CD4-positive, alpha-beta memory T cell (primary cell): ENCODE measurements at regions of chr12 and their contacts with region 1.

Region 1: DNA sequence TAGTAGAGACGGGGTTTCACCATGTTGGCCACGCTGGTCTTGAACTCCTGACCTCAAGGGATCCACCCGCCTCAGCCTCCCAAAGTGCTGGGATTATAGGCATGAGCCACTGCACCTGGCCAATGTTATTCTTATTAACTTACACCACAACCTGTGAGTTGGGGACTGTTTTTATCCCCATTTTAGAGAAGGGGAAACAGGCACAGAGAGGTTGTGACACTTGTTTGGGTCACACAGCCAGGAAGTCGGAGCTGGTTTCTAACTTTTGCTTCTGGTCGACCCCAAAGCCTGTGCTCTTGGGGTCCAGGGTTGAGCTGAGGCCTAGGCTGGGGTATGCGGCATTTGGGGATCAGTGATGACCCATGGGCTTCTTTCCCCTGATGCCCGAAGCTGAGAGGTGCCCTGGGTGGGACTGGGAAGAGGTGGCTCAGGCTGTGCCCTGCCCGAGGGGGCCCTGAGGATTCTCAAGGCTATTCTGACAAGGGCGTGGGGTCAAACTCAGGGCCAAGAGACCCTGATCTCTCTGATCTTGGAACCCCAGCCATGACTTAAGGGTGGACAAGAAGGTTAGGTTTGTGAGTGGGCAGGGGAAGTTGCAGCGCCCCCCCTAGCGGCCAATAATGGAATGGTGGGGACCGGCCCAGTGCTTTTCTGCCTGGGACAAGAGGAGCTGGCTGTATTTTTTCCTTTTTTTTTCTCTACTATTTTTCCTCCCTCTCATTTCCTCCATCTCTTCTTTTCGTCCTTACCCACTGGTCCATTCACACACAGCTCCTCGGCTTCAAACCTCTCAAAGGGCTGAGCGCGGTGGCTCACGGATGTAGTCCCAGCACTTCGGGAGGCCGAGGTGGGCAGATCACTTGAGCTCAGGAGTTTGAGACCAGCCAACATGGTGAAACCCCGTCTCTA is 3.0 kb downstream of the SDSL start:
- DNase-seq: peak; percentile 30 to 43 (median 35)
- H3K4me3 ChIP-seq: no peak overlapping the region
- H3K4me3 Mint-ChIP-seq: no peak overlapping the region
- H3K27ac ChIP-seq: no peak overlapping the region
- H3K27ac Mint-ChIP-seq: no peak overlapping the region
- H3K4me1 ChIP-seq: no peaks in the 10 kb centered on the region
- H3K4me1 Mint-ChIP-seq: peaks cover 0 to 13% (median 0%) of the 10 kb centered on the region in 4 donors
- H3K27me3 ChIP-seq: no peaks in the 10 kb centered on the region
- H3K27me3 Mint-ChIP-seq: peaks cover 6 to 11% of the 10 kb centered on the region in 2 donors

Region 2: DNA sequence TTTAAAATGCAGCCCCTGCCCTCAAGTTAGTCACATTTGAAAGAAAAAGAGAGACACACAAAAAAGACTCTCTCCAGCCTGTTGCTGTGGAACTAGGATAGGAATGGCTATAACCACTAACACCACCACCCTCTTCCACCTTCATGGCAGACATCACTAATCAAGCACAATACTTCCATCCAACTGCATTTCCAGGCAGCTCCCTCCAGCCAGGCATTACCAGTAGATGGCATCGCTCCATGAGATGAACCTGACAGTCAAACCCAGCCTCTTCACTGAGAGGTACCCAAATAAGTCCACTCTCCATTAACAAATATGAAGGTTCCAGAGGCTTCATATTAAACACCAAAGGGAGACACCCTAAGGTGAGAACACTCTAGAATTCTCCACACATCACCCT is 114.7 kb before region 1 on chr12:
- CTCF ChIA-PET with region 1: interaction called, 13 read pairs
- POLR2A ChIA-PET with region 1: no interaction called
- intact Hi-C with region 1: no loop called
- DNase-seq: no peak
- H3K4me3 ChIP-seq: no peak overlapping the region
- H3K4me3 Mint-ChIP-seq: no peak overlapping the region
- H3K27ac ChIP-seq: no peak overlapping the region
- H3K27ac Mint-ChIP-seq: peak overlapping the region in 4 of 7 donors; percentile 27 to 67 (median 54)
- H3K4me1 ChIP-seq: no peaks in the 10 kb centered on the region
- H3K4me1 Mint-ChIP-seq: peaks cover 0 to 2% (median 0%) of the 10 kb centered on the region in 4 donors
- H3K27me3 ChIP-seq: no peaks in the 10 kb centered on the region
- H3K27me3 Mint-ChIP-seq: no peaks in the 10 kb centered on the region

Region 3: DNA sequence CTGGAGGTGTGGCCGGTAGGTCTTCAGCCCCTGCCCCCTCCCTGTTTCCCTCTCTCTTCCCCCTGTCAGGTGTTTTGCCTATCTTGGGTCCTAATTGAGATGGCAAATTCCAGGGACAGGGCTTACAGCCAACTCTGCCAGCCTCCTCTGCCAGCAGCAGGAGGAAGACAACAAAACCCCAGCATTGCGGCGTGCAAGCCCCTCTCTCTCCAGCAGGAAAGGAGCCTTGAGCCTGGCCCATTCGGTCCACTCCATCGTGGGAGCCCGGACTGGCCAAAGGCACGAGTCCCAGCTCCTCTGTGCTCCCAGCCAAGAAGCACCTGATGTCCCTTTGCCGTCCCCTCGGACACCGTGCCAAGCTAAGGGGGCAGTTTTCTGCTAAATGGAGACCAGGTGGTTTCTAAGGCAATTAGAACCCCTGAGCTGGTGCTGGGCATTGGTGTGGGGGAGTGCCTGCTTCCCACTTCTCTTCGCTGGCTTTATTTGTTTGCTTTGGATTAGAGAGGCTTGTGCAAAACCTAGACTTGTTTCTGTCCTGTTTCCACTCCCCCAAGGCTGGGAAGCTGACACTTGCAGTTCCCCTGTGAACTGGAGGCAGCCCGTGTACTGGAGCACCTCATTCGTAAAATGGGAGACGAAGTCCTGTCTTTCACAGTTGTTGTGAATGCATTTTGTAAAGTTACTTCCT is 103.6 kb after region 1 on chr12:
- CTCF ChIA-PET with region 1: no interaction called
- POLR2A ChIA-PET with region 1: no interaction called
- intact Hi-C with region 1: no loop called
- DNase-seq: no peak
- H3K4me3 ChIP-seq: no peak overlapping the region
- H3K4me3 Mint-ChIP-seq: no peak overlapping the region
- H3K27ac ChIP-seq: no peak overlapping the region
- H3K27ac Mint-ChIP-seq: no peak overlapping the region
- H3K4me1 ChIP-seq: no peaks in the 10 kb centered on the region
- H3K4me1 Mint-ChIP-seq: no peaks in the 10 kb centered on the region
- H3K27me3 ChIP-seq: no peaks in the 10 kb centered on the region
- H3K27me3 Mint-ChIP-seq: peaks cover 14 to 33% of the 10 kb centered on the region in 2 donors